Caco-2 (cell line): ENCODE measurements at regions of chr11 and their contacts with region 1.

Region 1: DNA sequence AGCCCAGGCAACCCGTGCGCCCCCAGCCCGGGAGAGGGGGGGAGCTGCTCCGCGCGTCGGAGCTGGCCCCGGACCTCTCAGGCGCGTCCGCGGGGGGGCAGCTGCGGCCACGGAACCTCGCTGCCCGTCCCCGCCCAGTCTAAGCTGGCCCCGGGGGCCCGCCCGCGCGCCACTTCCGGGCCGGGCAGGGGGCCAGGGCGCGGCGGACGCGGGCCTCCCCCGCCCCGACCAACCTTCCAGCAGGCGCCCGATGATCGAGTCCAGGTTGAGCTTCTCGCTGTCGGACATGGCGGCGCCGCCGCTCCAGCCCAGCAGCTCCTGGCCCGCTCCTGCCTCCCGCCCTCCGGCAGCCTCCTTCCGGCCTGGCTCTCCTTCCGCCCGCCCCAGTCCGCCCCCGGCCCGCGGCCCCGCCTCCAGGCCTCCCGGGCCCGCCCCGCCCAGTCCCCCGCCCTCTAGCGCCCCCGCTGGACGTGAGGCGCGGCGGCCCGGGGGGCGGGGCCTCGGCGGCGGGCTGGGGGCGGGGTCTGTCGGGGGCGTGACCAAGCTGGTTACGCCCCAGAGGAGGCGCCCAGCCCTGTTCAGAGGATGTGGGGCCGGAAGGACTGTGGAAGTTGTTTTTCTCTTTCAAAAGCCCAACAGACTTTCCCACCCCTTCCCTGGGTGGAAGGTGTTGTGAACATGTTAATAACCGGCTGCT is at the start of gene PPP1CA:
- DNase-seq: peak; percentile 94 to 98
- H3K4me3 ChIP-seq: peak within 1 kb of the TSS; percentile 69
- H3K4me3 Mint-ChIP-seq: peak within 1 kb of the TSS; percentile 75
- H3K27ac Mint-ChIP-seq: peak within 1 kb of the TSS; percentile 74
- H3K4me1 ChIP-seq: peaks cover 14% of the 10 kb centered on the region
- H3K4me1 Mint-ChIP-seq: peaks cover 2% of the 10 kb centered on the region
- H3K27me3 ChIP-seq: no peaks in the 10 kb centered on the region
- H3K27me3 Mint-ChIP-seq: no peaks in the 10 kb centered on the region
- CTCF ChIP-seq: peak; percentile 41 to 58
- total RNA-seq, gene PPP1CA: 384 and 389 TPM in 2 replicates

Region 2: GRCh38 chr11:67239783-67240575 is 161.7 kb before region 1 on chr11:
- CTCF ChIA-PET with region 1: interaction called, 12 read pairs
- POLR2A ChIA-PET with region 1: interaction called, 6 read pairs
- intact Hi-C with region 1: no loop called
- DNase-seq: peak; percentile 100
- H3K4me3 ChIP-seq: peak overlapping the region; percentile 46
- H3K4me3 Mint-ChIP-seq: peak overlapping the region; percentile 96
- H3K27ac Mint-ChIP-seq: peak overlapping the region; percentile 98
- H3K4me1 ChIP-seq: peaks cover 30% of the 10 kb centered on the region
- H3K4me1 Mint-ChIP-seq: peaks cover 34% of the 10 kb centered on the region
- H3K27me3 ChIP-seq: no peaks in the 10 kb centered on the region
- H3K27me3 Mint-ChIP-seq: no peaks in the 10 kb centered on the region
- CTCF ChIP-seq: no peak

Region 3: DNA sequence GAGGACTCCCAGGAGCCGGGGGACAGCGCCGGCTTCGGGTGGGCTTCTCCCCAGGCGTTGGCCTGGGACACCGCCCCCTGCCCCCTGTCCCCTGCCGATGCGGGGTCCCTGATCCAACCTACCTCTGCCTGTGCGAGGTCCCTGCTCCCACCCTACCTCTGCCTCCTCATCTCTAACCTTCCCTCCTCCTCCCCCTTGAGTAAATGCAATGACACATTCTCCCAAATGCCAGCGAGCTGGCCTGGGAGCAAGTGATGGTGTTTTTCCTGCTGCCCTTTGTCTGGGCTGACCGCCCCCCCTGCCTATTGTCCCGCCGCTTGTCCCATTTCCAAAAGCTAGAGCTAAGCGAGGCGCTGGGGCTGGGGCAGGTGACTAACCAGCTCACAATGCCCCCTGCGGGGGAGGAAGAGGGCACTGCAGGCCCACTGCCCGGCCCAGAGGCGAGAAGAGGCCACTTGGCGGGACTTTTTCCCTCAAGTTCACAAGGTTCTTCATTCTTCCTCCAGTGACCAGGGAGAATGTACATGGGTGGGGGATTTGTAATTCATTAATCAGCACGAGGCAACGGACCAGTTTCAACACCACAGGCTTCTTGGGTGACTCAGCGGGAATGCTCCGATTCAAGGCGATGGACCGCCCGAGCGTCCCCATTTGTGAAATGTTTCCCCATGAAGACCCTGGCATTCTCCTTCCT is 27.6 kb before region 1 on chr11:
- CTCF ChIA-PET with region 1: interaction called, 15 read pairs
- POLR2A ChIA-PET with region 1: interaction called, 7 read pairs
- intact Hi-C with region 1: no loop called
- DNase-seq: peak; percentile 95
- H3K4me3 ChIP-seq: peak overlapping the region; percentile 86
- H3K4me3 Mint-ChIP-seq: peak overlapping the region; percentile 95
- H3K27ac Mint-ChIP-seq: peak overlapping the region; percentile 83
- H3K4me1 ChIP-seq: peaks cover 31% of the 10 kb centered on the region
- H3K4me1 Mint-ChIP-seq: no peaks in the 10 kb centered on the region
- H3K27me3 ChIP-seq: no peaks in the 10 kb centered on the region
- H3K27me3 Mint-ChIP-seq: no peaks in the 10 kb centered on the region
- CTCF ChIP-seq: peak; percentile 89 to 97

Region 4: DNA sequence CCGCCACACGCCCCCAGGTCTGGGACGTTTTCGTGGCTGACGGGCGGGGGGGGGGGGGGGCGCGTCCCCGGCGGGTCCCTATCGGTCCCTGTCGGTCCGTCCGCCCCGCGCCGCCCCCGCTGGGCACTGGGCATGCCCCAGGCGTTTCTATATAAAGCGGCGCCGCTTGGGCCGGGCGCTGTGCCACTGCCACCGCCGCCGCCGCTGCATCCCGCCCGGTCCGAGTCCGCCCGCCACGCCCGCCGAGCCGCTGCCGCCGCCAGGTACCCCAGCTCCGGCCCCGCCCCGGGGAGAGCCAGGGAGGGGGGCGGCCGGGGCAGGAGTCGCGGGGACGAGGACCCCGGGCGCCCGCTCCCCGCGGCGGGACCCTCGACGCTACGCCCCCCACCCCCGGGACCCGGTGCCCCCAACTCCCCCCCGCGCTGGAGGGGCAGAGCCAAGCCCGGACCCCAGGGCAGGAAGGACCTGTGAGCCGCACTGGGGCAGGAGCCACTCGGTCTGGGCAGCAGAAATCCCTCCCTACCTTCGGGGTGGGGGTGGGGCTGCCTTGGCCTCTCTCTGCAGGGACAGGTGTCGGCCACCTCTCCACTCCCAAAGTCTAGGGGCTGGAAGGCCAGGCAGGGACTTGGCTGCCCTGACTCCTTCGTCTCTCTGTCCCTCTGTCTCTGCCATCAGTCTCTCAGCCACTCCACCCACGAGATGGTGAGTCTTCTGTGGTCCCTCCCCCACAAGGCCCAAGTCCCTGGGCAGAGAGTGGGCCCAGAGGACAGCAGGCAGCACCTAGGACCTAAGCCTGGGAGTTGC is 14.1 kb after region 1 on chr11 and contains the start of gene CARNS1:
- CTCF ChIA-PET with region 1: interaction called, 45 read pairs
- POLR2A ChIA-PET with region 1: interaction called, 18 read pairs
- intact Hi-C with region 1: no loop called
- DNase-seq: no peak
- H3K4me3 ChIP-seq: peak within 1 kb of the TSS; percentile 20
- H3K4me3 Mint-ChIP-seq: peak within 1 kb of the TSS; percentile 64
- H3K27ac Mint-ChIP-seq: no peak within 1 kb of the TSS
- H3K4me1 ChIP-seq: peaks cover 15% of the 10 kb centered on the region
- H3K4me1 Mint-ChIP-seq: peaks cover 27% of the 10 kb centered on the region
- H3K27me3 ChIP-seq: no peaks in the 10 kb centered on the region
- H3K27me3 Mint-ChIP-seq: no peaks in the 10 kb centered on the region
- CTCF ChIP-seq: no peak
- total RNA-seq, gene CARNS1: 0.09 and 0.28 TPM in 2 replicates

Region 5: DNA sequence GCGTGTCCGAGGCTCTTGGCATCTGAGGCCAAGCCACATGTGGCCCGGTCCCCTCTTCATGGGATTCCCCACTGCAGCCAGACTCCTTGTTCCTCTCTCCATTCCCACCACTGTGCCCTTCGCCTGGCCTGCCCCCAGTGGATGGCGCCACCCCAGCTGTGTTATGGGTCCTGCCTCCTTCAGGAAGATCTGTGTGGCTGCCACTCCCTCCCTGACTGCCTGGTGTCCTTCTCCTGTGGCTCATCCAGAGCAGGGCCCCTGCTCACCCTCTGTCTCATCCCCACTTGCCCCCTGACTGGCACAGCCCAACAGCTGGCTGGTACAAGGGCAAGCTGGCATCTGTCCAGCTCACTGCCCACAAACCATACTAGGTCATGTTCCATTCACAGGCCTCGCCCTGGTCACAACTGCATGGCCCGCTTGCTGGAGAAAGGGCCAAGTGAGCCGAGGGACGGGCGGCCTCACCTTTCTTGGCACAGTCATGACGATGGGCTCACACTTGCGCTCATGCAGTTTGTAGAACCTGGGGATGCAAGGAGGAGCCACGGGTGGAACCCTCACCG is 37.8 kb after region 1 on chr11:
- CTCF ChIA-PET with region 1: interaction called, 11 read pairs
- POLR2A ChIA-PET with region 1: interaction called, 11 read pairs
- intact Hi-C with region 1: no loop called
- DNase-seq: peak in 1 of 2 experiments; percentile 68
- H3K4me3 ChIP-seq: no peak overlapping the region
- H3K4me3 Mint-ChIP-seq: peak overlapping the region; percentile 2
- H3K27ac Mint-ChIP-seq: peak overlapping the region; percentile 9
- H3K4me1 ChIP-seq: peaks cover 14% of the 10 kb centered on the region
- H3K4me1 Mint-ChIP-seq: no peaks in the 10 kb centered on the region
- H3K27me3 ChIP-seq: no peaks in the 10 kb centered on the region
- H3K27me3 Mint-ChIP-seq: no peaks in the 10 kb centered on the region
- CTCF ChIP-seq: peak in 1 of 2 experiments; percentile 38

Region 6: DNA sequence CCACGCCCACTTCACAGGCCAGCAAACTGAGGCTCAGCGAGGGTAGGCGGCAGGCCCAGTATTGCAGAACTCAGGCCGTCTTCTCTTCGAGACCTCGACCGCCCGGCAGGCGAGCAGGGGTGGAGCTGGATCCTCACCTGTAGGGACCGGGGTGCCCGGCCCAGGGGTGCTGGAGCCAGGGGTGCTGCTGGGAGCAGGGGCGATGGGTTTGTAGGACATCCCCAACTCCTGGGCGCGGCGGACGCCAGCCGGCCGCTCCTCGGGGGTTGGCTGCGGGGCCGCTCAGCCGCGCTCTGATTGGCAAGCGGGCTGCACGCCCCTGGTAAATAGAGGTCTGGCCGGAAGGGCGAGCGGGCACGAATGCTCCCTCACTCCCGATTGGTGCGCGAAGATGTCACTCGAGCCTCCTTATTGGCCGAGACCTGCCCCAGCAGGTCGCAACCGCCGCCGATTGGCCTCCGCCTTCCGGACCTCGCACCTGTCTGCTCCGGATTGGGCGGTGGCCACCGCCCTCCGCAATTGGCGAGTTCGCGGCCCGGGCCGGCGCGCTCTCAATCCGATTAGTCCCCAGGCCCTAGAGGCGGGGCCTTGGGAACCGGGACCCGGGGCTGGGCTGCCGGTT is 106.3 kb after region 1 on chr11 and contains the start of gene CDK2AP2:
- CTCF ChIA-PET with region 1: interaction called, 4 read pairs
- POLR2A ChIA-PET with region 1: no interaction called
- intact Hi-C with region 1: loop called (anchors 5 kb)
- DNase-seq: peak; percentile 100
- H3K4me3 ChIP-seq: peak within 1 kb of the TSS; percentile 74
- H3K4me3 Mint-ChIP-seq: peak within 1 kb of the TSS; percentile 99
- H3K27ac Mint-ChIP-seq: peak within 1 kb of the TSS; percentile 100
- H3K4me1 ChIP-seq: peaks cover 63% of the 10 kb centered on the region
- H3K4me1 Mint-ChIP-seq: peaks cover 52% of the 10 kb centered on the region
- H3K27me3 ChIP-seq: no peaks in the 10 kb centered on the region
- H3K27me3 Mint-ChIP-seq: no peaks in the 10 kb centered on the region
- CTCF ChIP-seq: peak in 1 of 2 experiments; percentile 6
- total RNA-seq, gene CDK2AP2: 96.1 and 99.4 TPM in 2 replicates

Region 7: DNA sequence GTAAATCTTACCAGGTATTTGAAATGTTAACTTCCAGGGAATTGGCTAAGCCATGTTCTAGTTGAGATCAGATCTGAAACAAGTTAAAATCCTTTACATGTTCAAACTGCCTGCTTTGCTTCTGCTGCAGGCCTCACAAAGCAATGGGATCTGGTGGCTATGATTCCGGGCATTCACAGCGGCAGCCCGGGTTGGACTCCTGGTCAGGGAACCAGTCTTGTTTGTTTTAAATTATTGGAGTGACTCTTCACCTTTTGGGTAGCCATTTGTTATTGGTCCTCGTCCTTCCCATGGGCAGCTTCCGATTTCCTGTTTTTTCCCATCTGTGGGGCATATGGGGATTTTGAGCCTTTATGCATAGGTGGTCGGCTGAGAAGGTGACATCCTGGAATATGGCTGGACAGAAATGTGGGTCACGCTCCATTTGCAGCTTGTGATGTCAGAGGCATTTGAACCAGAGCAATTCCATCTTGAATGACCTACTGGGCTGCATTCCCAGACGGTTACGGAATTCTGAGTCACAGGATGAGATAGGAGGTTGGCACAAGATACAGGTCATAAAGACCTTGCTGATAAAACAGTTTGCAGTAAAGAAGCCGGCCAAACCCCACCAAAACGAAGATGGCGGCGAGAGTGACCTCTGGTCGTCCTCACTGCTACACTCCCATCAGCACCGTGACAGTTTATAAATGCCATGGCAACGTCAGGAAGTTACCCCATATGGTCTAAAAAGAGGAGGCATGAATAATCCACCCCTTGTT is 161.9 kb after region 1 on chr11:
- CTCF ChIA-PET with region 1: no interaction called
- POLR2A ChIA-PET with region 1: no interaction called
- intact Hi-C with region 1: no loop called
- DNase-seq: peak; percentile 89 to 96
- H3K4me3 ChIP-seq: no peak overlapping the region
- H3K4me3 Mint-ChIP-seq: peak overlapping the region; percentile 59
- H3K27ac Mint-ChIP-seq: peak overlapping the region; percentile 95
- H3K4me1 ChIP-seq: peaks cover 33% of the 10 kb centered on the region
- H3K4me1 Mint-ChIP-seq: peaks cover 32% of the 10 kb centered on the region
- H3K27me3 ChIP-seq: no peaks in the 10 kb centered on the region
- H3K27me3 Mint-ChIP-seq: no peaks in the 10 kb centered on the region
- CTCF ChIP-seq: no peak